Dorsolateral prefrontal cortex (tissue), 120 donors: ENCODE measurements at regions of chr12 and their contacts with region 1.

Region 1: GRCh38 chr12:82358200-82359114 is at the starts of genes CCDC59 and METTL25:
- DNase-seq: peak; percentile 93 to 98 (median 96)
- H3K4me3 ChIP-seq: peak within 1 kb of the TSS; percentile 64 to 100 (median 92)
- H3K27ac ChIP-seq: peak within 1 kb of the TSS; percentile 78 to 100 (median 98)
- H3K27me3 ChIP-seq: no peaks in the 10 kb centered on the region
- CTCF ChIP-seq: peak; percentile 66 to 99 (median 91)
- total RNA-seq, gene CCDC59: 18.7 to 46.8 (median 29.4) TPM
- total RNA-seq, gene METTL25: 14.3 to 40.2 (median 22.9) TPM

Region 2: GRCh38 chr12:81644503-81644902 is 714.0 kb before region 1 on chr12:
- intact Hi-C with region 1: loop called in 1 of 2 experiments (anchors 10 kb)
- DNase-seq: no peak
- H3K4me3 ChIP-seq: peak overlapping the region in 1 of 59 donors; percentile 2
- H3K27ac ChIP-seq: no peak overlapping the region
- H3K27me3 ChIP-seq: no peaks in the 10 kb centered on the region
- CTCF ChIP-seq: peak; percentile 44 to 93 (median 75)

Region 3: DNA sequence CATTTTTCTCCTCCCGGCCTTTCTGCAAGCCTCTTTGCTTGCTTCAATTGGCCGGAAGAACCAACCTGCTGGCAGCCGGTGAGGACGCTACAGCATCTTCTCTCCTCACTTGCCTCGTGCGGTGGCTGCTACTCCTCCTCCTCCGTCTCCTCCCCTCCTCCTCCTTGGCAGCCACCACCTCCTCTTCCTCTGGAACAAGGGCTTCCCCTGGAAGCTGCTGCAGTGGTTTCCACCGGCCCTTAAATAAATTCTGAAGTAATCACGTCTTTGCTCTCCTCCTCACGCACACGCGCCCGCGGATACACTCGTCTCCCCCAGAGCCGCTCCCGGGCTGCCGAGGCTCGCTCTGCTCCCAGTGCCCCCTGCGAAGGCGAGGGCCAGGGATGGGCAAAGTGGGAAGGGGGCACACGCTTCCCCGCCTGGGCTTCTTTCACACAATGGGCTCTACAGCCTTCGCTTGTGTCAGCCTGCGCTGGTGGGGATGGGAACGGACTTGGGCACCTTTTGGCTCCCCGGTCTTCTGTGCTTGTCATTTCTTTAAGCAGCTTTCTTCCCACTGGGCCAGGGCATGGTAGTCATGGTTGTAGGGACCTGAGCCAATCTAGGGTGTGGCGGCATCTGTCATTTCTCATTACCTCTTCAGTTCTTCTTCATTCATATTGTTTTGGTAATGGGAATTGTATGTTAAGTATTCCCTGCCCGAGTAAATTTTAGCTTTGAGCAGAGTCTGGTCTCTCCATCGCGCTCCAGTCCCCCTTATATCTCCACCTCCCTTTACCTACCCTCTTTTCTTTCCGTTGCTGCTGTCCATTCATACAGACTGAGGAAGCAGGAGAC is 599.0 kb before region 1 on chr12 and contains the start of gene PPFIA2:
- intact Hi-C with region 1: loop called (anchors 2 to 5 kb)
- DNase-seq: peak; percentile 37 to 79 (median 68)
- H3K4me3 ChIP-seq: peak within 1 kb of the TSS; percentile 56 to 94 (median 78)
- H3K27ac ChIP-seq: peak within 1 kb of the TSS in 57 of 59 donors; percentile 4 to 92 (median 78)
- H3K27me3 ChIP-seq: no peaks in the 10 kb centered on the region
- CTCF ChIP-seq: no peak
- total RNA-seq, gene PPFIA2: 99.2 to 234 (median 172) TPM

Region 4: GRCh38 chr12:82400824-82401223 is 42.4 kb after region 1 on chr12:
- intact Hi-C with region 1: no loop called
- DNase-seq: no peak
- H3K4me3 ChIP-seq: no peak overlapping the region
- H3K27ac ChIP-seq: no peak overlapping the region
- H3K27me3 ChIP-seq: no peaks in the 10 kb centered on the region
- CTCF ChIP-seq: no peak

Region 5: DNA sequence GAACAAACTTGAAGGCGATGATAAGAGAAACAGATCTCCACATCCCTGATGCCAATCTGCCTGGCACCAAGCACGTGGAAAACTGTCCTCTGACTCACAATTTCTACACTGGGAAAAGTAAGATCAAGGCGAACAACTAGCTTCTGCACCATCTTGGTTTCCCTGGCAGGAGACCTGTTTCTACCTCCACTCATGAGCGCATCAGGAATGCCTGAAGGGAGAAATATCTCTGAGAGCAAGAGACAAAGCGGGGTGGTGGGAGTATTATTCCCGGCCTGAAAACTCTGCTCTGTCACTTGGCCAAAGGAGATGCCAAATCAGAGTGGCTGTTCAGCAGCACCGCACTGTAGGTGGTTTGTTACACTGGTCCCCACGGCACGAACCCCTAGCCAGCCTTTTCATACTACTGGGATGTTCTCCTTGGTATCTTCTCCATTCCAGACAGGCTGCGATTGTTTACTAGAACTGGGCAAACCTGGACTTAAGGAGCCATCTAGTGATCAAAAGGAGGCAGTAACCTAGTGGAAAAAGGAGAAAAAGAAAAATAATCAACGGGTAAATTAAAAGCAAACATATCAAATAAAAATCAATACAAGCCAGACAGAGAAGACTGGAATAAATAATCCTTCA is 269.2 kb after region 1 on chr12:
- intact Hi-C with region 1: loop called in 1 of 2 experiments (anchors 2 kb)
- DNase-seq: peak in 1 of 10 donors; percentile 17
- H3K4me3 ChIP-seq: no peak overlapping the region
- H3K27ac ChIP-seq: peak overlapping the region in 27 of 59 donors; percentile 0 to 98 (median 93)
- H3K27me3 ChIP-seq: no peaks in the 10 kb centered on the region
- CTCF ChIP-seq: peak in 54 of 56 donors; percentile 15 to 68 (median 46)